Sigmoid colon (tissue), 7 donors: ENCODE measurements at regions of chr19 and their contacts with region 1.

Region 1: GRCh38 chr19:57362997-57363705 is at the starts of genes TRAPPC2B and ZNF547:
- DNase-seq: peak; percentile 100
- H3K4me3 ChIP-seq: peak within 1 kb of the TSS; percentile 86 to 91 (median 88)
- H3K27ac ChIP-seq: peak within 1 kb of the TSS; percentile 94 to 98 (median 96)
- H3K4me1 ChIP-seq: peaks cover 0 to 17% (median 12%) of the 10 kb centered on the region in 4 donors
- H3K27me3 ChIP-seq: no peaks in the 10 kb centered on the region
- CTCF ChIP-seq: no peak
- EP300 ChIP-seq: peak in 2 of 4 donors; percentile 55 to 97
- POLR2A ChIP-seq: peak in 1 of 2 donors; percentile 59
- total RNA-seq, gene TRAPPC2B: 21.3 to 28.1 (median 27.1) TPM
- total RNA-seq, gene ZNF547: 0.83 to 3.6 (median 2.8) TPM

Region 2: GRCh38 chr19:57320180-57321084 is 42.7 kb before region 1 on chr19 and contains the start of gene ZNF543:
- intact Hi-C with region 1: loop called (anchors 5 kb)
- DNase-seq: peak; percentile 98
- H3K4me3 ChIP-seq: peak within 1 kb of the TSS; percentile 64 to 94 (median 68)
- H3K27ac ChIP-seq: peak within 1 kb of the TSS; percentile 83 to 92 (median 85)
- H3K4me1 ChIP-seq: peaks cover 0 to 24% (median 15%) of the 10 kb centered on the region in 4 donors
- H3K27me3 ChIP-seq: no peaks in the 10 kb centered on the region
- CTCF ChIP-seq: no peak
- EP300 ChIP-seq: no peak
- POLR2A ChIP-seq: peak; percentile 44 to 65
- total RNA-seq, gene ZNF543: 5.4 to 8.1 (median 7.5) TPM

Region 3: DNA sequence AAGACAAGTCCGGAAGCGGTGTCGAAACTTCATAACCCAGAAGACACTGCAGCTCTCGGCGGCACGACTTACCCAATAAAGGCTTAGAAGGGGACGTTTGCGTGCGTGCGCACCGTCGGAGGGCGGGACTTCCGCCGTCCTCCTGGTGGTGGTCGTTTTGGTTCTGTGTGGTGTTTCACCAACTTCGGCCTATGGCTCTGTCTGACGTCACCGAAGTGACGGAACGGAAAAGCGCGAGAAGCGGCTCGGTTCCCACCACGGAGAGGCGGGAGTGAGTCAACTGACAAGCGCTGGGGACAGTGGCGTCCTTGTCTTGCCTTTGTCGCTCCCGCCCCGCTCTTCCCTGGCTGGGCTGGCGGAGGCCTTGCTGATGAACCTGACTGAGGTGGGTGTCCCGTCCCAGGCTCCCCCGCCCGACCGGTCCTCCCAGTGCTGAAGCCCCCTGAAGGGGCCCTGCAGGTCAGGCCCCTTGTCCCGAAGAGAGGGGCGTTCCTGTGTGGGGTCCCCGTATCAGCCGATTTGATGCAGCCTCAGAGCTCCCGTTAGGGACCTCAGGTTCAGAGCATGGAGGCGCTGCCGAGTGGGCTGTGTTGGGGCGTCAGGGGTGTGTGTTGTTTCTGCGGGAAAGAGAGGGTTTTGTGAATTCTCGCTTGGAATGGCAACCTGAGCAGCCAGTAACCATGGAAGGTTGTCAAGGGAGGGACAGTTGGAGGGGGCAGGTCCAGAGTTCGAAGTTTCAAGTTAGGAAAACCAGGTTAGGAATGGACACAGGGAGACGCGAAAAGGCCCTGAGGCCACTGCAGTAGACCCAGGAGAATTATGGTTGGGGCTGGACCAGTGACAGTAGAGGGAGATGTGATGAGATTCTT is 26.8 kb after region 1 on chr19 and contains the start of gene ZNF548:
- intact Hi-C with region 1: loop called (anchors 1 kb)
- DNase-seq: peak; percentile 98
- H3K4me3 ChIP-seq: peak within 1 kb of the TSS; percentile 67 to 91 (median 82)
- H3K27ac ChIP-seq: peak within 1 kb of the TSS; percentile 89 to 95 (median 92)
- H3K4me1 ChIP-seq: peaks cover 4 to 26% (median 14%) of the 10 kb centered on the region in 4 donors
- H3K27me3 ChIP-seq: no peaks in the 10 kb centered on the region
- CTCF ChIP-seq: peak; percentile 12 to 42 (median 26)
- EP300 ChIP-seq: peak in 1 of 4 donors; percentile 87
- POLR2A ChIP-seq: peak; percentile 57 to 74
- total RNA-seq, gene ZNF548: 21.9 to 29.1 (median 22.8) TPM